Endothelial cell of umbilical vein (primary cell): ENCODE measurements at regions of chr3 and their contacts with region 1.

Region 1: GRCh38 chr3:195312714-195313113 is 41.8 kb upstream of the XXYLT1 start:
- DNase-seq: peak; percentile 66
- H3K4me3 ChIP-seq: peak overlapping the region in 1 of 3 experiments; percentile 30
- H3K27ac ChIP-seq: no peak overlapping the region
- H3K4me1 ChIP-seq: peaks cover 17% of the 10 kb centered on the region
- H3K27me3 ChIP-seq: no peaks in the 10 kb centered on the region
- CTCF ChIP-seq: no peak
- POLR2A ChIP-seq: no peak

Region 2: GRCh38 chr3:195059006-195059350 is 253.7 kb before region 1 on chr3:
- CTCF ChIA-PET with region 1: no interaction called
- POLR2A ChIA-PET with region 1: no interaction called
- dilution Hi-C with region 1: no loop called
- intact Hi-C with region 1: no loop called
- DNase-seq: peak; percentile 88
- H3K4me3 ChIP-seq: no peak overlapping the region
- H3K27ac ChIP-seq: peak overlapping the region; percentile 54
- H3K4me1 ChIP-seq: peaks cover 15% of the 10 kb centered on the region
- H3K27me3 ChIP-seq: no peaks in the 10 kb centered on the region
- CTCF ChIP-seq: no peak
- POLR2A ChIP-seq: peak; percentile 32

Region 3: GRCh38 chr3:195197765-195198425 is 114.8 kb before region 1 on chr3:
- CTCF ChIA-PET with region 1: no interaction called
- POLR2A ChIA-PET with region 1: no interaction called
- dilution Hi-C with region 1: no loop called
- intact Hi-C with region 1: no loop called
- DNase-seq: peak; percentile 67
- H3K4me3 ChIP-seq: no peak overlapping the region
- H3K27ac ChIP-seq: peak overlapping the region; percentile 63
- H3K4me1 ChIP-seq: peaks cover 45% of the 10 kb centered on the region
- H3K27me3 ChIP-seq: no peaks in the 10 kb centered on the region
- CTCF ChIP-seq: no peak
- POLR2A ChIP-seq: no peak

Region 4: GRCh38 chr3:195286115-195286872 is 26.4 kb before region 1 on chr3:
- CTCF ChIA-PET with region 1: interaction called, 6 read pairs
- POLR2A ChIA-PET with region 1: no interaction called
- dilution Hi-C with region 1: no loop called
- intact Hi-C with region 1: loop called (anchors 2 kb)
- DNase-seq: peak; percentile 53
- H3K4me3 ChIP-seq: no peak overlapping the region
- H3K27ac ChIP-seq: peak overlapping the region; percentile 35
- H3K4me1 ChIP-seq: peaks cover 15% of the 10 kb centered on the region
- H3K27me3 ChIP-seq: no peaks in the 10 kb centered on the region
- CTCF ChIP-seq: no peak
- POLR2A ChIP-seq: no peak

Region 5: DNA sequence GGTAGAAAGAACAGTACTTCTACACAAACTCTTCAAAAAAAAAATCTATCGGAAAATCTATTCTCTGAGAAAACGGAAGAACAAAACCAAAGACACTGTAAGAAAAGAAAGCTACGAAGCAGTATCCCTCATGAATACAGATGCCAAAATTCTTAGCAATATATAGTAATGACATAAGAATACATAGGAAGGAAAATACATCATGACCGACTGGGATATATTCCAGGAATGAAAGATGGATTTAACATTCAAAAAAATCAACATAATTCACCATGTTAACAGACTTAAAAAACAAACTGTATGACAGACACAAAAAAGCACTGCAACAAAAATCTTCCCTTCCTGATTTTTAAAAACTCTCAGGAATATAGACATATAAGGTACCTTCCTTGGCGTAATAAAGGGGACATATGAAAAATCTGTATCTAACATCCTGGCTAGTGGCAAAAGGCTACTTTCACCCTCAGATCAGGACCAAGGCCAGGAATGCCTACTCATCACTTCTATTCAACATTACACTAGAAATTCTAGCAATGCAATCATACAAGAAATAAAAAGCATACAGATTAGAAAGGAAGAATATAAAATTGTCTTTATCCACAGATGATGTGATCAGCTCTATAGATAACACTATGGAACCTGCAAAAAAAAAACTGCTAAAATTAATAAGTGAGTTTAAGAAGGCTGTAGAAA is 35.9 kb after region 1 on chr3:
- CTCF ChIA-PET with region 1: no interaction called
- POLR2A ChIA-PET with region 1: no interaction called
- dilution Hi-C with region 1: no loop called
- intact Hi-C with region 1: loop called (anchors 1 kb)
- DNase-seq: peak; percentile 20
- H3K4me3 ChIP-seq: no peak overlapping the region
- H3K27ac ChIP-seq: no peak overlapping the region
- H3K4me1 ChIP-seq: no peaks in the 10 kb centered on the region
- H3K27me3 ChIP-seq: no peaks in the 10 kb centered on the region
- CTCF ChIP-seq: no peak
- POLR2A ChIP-seq: no peak